Pancreas (tissue), 10 donors: ENCODE measurements at regions of chr6 and their contacts with region 1.

Region 1: GRCh38 chr6:31366693-31367470 is 9.9 kb upstream of the HLA-B start:
- DNase-seq: peak; percentile 68 to 97 (median 88)
- ATAC-seq: peak; percentile 100
- H3K4me3 ChIP-seq: peak overlapping the region in 1 of 4 donors; percentile 31
- H3K27ac ChIP-seq: no peak overlapping the region
- H3K4me1 ChIP-seq: no peaks in the 10 kb centered on the region
- H3K27me3 ChIP-seq: no peaks in the 10 kb centered on the region
- CTCF ChIP-seq: peak; percentile 89 to 96 (median 92)

Region 2: DNA sequence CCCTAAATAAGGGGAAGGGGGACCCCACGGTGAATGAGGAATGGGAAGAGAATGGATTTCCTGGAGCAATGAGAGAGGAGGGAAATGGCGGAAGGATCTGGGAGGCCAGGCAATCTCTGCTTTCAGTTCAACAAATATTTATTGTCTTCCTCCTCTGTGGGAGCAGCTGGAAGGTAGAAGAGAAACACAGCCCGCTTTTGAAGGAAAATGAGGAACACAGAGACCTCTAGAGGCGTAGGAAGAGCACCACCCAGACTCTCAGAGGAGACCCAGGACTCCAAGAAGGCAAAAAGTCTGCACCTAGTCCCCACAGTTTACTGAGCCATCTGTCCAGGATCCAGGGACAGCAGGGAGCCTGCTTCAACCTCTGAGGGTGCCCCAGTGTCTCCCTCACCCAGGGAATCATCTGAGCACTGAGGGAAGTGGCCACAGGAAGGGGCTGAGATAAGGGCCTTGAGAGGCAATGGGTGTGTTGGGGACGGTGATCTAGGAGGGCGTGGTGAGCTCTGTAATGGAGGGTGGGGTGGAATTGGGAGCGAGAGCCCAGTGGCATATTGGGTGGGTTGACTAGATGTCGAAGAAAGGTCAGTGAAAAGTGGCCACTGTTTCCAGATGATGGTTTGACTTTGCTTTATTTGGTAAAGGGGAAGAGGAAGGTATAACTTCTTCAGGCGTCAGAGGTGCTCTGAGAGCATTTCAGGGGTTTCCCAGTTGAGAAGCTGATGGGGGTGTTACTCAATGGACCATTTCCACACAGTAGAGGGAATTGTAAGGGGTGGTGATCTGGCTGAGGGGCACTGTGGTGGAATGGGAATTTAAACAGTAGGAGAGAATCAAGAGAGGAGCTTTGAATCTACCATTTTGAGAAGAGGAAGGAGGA is 251.7 kb before region 1 on chr6:
- intact Hi-C with region 1: no loop called
- DNase-seq: no peak
- ATAC-seq: peak in 2 of 4 donors; percentile 43 to 67
- H3K4me3 ChIP-seq: no peak overlapping the region
- H3K27ac ChIP-seq: peak overlapping the region in 1 of 4 donors; percentile 57
- H3K4me1 ChIP-seq: no peaks in the 10 kb centered on the region
- H3K27me3 ChIP-seq: no peaks in the 10 kb centered on the region
- CTCF ChIP-seq: no peak

Region 3: GRCh38 chr6:31197559-31198305 is 169.2 kb before region 1 on chr6:
- intact Hi-C with region 1: loop called in 2 of 3 experiments (anchors 5 to 10 kb)
- DNase-seq: peak; percentile 89 to 95 (median 92)
- ATAC-seq: peak; percentile 87 to 93 (median 88)
- H3K4me3 ChIP-seq: peak overlapping the region; percentile 23 to 59 (median 45)
- H3K27ac ChIP-seq: peak overlapping the region; percentile 76 to 98 (median 97)
- H3K4me1 ChIP-seq: peaks cover 0 to 15% (median 6%) of the 10 kb centered on the region in 3 donors
- H3K27me3 ChIP-seq: no peaks in the 10 kb centered on the region
- CTCF ChIP-seq: no peak

Region 4: GRCh38 chr6:31210123-31210522 is 156.8 kb before region 1 on chr6:
- intact Hi-C with region 1: no loop called
- DNase-seq: no peak
- ATAC-seq: peak in 2 of 4 donors; percentile 8 to 24
- H3K4me3 ChIP-seq: no peak overlapping the region
- H3K27ac ChIP-seq: peak overlapping the region in 2 of 4 donors; percentile 10 to 38
- H3K4me1 ChIP-seq: peaks cover 15 to 25% (median 25%) of the 10 kb centered on the region in 3 donors
- H3K27me3 ChIP-seq: no peaks in the 10 kb centered on the region
- CTCF ChIP-seq: no peak